Activated CD8-positive, alpha-beta memory T cell treated with anti-CD3 and anti-CD28 coated beads, Interleukin-2, amount 10 ng/mL, durations not matched to agents 7 days and 5 days (primary cell): ENCODE measurements at regions of chr3 and their contacts with region 1.

Region 1: GRCh38 chr3:32947789-32948238 is 3.6 kb upstream of the CCR4 start:
- DNase-seq: peak; percentile 95
- ATAC-seq: peak; percentile 83
- H3K4me3 Mint-ChIP-seq: no peak overlapping the region
- H3K27ac Mint-ChIP-seq: peak overlapping the region; percentile 11
- H3K4me1 Mint-ChIP-seq: peaks cover 43% of the 10 kb centered on the region
- H3K27me3 Mint-ChIP-seq: no peaks in the 10 kb centered on the region

Region 2: GRCh38 chr3:32934150-32934742 is 13.6 kb before region 1 on chr3:
- CTCF ChIA-PET with region 1: no interaction called
- DNase-seq: no peak
- ATAC-seq: no peak
- H3K4me3 Mint-ChIP-seq: no peak overlapping the region
- H3K27ac Mint-ChIP-seq: no peak overlapping the region
- H3K4me1 Mint-ChIP-seq: no peaks in the 10 kb centered on the region
- H3K27me3 Mint-ChIP-seq: peaks cover 2% of the 10 kb centered on the region

Region 3: GRCh38 chr3:32960404-32961170 is 12.8 kb after region 1 on chr3:
- CTCF ChIA-PET with region 1: interaction called, 25 read pairs
- DNase-seq: no peak
- ATAC-seq: peak; percentile 66
- H3K4me3 Mint-ChIP-seq: peak overlapping the region; percentile 29
- H3K27ac Mint-ChIP-seq: peak overlapping the region; percentile 78
- H3K4me1 Mint-ChIP-seq: peaks cover 50% of the 10 kb centered on the region
- H3K27me3 Mint-ChIP-seq: no peaks in the 10 kb centered on the region

Region 4: DNA sequence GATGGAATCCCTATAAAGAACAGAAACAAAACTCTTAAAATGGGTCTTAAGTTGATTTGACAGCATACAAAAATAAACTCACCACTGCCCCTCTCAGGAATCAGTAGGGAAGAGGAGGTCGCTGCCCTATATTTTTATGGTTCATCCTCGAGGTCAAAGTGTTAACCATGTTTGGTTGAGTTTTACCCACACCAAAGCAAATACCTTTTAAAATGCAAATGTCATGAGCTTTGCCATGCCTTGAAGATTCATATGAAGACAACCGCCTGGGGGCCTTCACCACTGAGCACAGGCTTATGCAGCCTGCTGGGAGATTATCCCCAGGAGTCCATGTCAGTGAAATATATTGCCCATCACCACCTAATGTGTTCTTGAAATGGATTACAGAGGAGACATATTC is 83.0 kb after region 1 on chr3:
- CTCF ChIA-PET with region 1: interaction called, 43 read pairs
- DNase-seq: peak; percentile 81
- ATAC-seq: peak; percentile 83
- H3K4me3 Mint-ChIP-seq: no peak overlapping the region
- H3K27ac Mint-ChIP-seq: peak overlapping the region; percentile 70
- H3K4me1 Mint-ChIP-seq: peaks cover 29% of the 10 kb centered on the region
- H3K27me3 Mint-ChIP-seq: no peaks in the 10 kb centered on the region

Region 5: DNA sequence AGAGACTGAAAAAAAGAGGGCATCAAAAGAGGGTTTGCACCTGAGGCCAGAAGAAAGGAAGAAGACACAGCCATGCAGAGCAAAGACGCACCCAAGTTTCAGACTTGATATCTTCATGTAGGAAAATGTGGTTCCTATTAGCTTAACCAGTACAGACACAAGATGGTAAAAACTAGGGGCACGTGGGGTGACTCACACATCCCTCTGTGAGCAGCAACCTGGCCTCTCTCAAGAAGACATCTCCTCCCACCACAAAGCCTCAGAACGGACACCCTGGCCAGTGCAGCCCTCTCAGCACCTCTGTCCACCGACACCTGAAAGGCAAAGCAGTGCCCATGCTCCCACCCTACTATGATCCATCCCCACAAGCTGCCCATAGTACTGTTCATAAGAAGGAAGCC is 115.8 kb after region 1 on chr3:
- CTCF ChIA-PET with region 1: interaction called, 203 read pairs
- DNase-seq: peak; percentile 82
- ATAC-seq: peak; percentile 68
- H3K4me3 Mint-ChIP-seq: peak overlapping the region; percentile 29
- H3K27ac Mint-ChIP-seq: peak overlapping the region; percentile 84
- H3K4me1 Mint-ChIP-seq: peaks cover 70% of the 10 kb centered on the region
- H3K27me3 Mint-ChIP-seq: no peaks in the 10 kb centered on the region

Region 6: DNA sequence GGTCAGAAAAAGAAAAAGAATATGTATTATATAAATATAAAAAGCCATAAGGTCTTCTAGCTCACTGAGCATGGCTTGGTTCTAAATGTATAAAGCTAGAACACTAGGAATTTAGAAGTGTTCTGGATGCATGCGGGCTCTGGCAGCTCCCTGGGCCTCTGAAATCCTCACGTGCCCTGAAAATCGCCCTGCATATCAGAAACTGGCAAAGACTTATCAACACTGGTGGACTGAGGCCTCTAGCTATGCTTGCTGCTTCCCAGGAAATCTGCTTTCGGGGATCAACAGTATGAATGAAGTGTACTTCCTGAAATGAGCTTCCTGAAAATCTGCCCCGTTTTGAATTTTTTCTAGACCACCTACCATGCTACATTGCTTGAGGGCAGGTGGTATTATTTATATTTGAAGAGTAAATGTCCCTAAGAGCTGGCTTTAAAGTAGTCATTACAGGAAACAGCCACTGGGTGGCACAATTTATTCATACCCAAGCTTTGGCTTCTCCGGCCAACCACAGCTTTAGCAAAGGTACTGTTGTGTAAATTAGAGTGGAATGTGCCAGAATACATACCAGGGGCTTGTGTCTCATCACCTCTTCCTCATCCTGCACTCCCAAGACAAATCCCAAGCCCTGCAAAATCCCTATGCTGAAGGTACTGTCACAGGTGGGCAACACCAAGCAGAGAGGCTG is 183.7 kb after region 1 on chr3:
- CTCF ChIA-PET with region 1: interaction called, 11 read pairs
- DNase-seq: peak; percentile 54
- ATAC-seq: peak; percentile 73
- H3K4me3 Mint-ChIP-seq: no peak overlapping the region
- H3K27ac Mint-ChIP-seq: no peak overlapping the region
- H3K4me1 Mint-ChIP-seq: peaks cover 6% of the 10 kb centered on the region
- H3K27me3 Mint-ChIP-seq: no peaks in the 10 kb centered on the region